ENCODE measurements at regions of chr5 and their contacts with region 1.

Region 1: GRCh38 chr5:399296-400281 is 43.4 kb upstream of the EXOC3 start:
- H3K4me3 Mint-ChIP-seq: peak overlapping the region; percentile 68
- H3K27ac Mint-ChIP-seq: peak overlapping the region; percentile 99
- H3K4me1 Mint-ChIP-seq: peaks cover 86% of the 10 kb centered on the region
- H3K27me3 Mint-ChIP-seq: peaks cover 2% of the 10 kb centered on the region

Region 2: GRCh38 chr5:368183-369084 is 31.2 kb before region 1 on chr5:
- intact Hi-C with region 1: loop called (anchors 2 kb)
- H3K4me3 Mint-ChIP-seq: no peak overlapping the region
- H3K27ac Mint-ChIP-seq: peak overlapping the region; percentile 89
- H3K4me1 Mint-ChIP-seq: peaks cover 74% of the 10 kb centered on the region
- H3K27me3 Mint-ChIP-seq: no peaks in the 10 kb centered on the region

Region 3: DNA sequence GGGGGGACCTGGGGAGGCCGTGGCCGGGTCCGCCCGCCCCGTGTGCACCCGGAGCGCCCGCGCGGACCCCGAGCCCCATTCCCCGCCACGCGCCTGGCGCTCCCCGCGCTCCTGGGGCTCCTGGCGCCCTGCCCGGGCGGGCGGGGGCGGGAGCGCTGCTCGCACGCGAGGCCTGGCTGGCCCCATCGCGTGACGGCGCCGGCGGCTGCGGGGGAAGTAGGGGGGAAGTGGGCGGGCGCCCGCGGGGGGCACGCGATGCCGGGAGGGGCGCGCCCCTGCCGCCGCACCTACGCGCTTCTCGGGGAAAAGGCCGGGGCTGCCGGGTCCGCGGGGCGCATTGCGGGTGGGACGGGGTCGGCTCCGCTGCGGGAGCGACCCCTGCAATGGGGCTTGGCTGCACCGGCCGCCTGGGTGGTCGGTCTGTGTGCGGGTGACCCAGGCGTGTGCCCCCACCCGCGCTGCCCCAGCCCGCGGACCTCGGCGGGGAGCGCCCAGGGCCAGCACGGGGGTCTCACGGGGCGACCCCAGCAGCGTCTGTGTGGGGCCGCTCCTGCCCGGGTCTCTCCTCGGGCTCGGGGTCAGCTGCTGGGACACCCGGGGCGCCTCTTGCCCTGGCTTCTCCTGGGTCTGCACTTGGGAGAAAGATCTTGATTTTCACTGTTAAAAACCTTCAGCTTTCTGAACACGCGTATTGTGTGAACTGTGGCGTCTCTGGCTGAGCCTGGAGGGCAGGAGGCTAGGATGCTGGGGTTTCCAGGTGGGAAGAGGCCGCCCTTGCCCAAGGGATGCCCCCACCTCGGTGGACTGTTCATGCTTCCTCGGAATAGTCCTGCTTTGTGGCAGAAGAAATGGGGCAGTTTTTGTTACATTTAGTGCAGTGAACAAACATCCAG is 25.6 kb before region 1 on chr5:
- intact Hi-C with region 1: loop called (anchors 1 kb)
- H3K4me3 Mint-ChIP-seq: peak overlapping the region; percentile 58
- H3K27ac Mint-ChIP-seq: peak overlapping the region; percentile 88
- H3K4me1 Mint-ChIP-seq: peaks cover 89% of the 10 kb centered on the region
- H3K27me3 Mint-ChIP-seq: no peaks in the 10 kb centered on the region

Region 4: DNA sequence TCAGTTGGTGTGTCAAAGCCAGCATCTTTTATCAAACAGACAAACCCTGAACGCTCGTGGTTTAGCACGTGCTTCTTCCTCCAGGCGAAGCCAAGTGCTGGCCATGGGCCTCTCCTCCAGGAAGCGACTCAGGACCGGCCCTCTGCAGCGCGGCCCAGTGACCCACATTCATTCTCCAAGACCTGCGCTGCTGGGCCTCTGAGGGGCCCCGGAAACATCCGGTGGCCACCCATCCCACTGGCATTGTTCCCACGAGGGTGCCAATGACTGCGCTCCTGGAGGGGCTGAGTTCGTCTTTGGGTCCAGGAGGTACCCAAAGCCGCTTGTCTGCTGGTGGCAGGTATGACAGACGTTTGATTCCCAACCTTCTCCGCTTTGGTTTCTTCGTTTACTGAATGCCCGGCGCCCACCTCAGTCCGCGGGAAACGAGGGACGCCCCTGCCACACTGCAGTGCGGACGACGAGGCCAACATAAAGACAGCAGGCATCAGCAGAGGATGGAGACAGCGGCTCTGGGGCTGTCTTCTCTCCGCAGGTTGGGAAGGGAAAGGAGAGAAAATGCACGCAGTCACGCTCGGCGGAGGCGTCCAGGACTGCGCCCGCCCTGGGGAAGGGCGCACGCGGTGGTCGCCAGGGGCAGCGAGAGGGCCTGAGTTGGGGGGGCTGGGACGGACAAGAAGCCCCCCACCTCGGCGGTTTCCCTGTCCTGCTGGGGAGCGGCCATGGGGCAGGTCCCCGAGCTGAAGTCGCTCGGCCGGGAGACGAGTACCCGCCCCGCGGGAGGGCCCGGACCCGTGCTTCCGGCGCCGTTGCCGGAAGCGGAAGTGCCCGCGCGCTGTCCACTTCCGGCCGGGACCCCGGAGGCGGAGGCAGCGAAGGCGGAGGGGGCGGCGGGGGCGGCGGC is 43.0 kb after region 1 on chr5 and contains the start of gene EXOC3:
- intact Hi-C with region 1: no loop called
- H3K4me3 Mint-ChIP-seq: peak within 1 kb of the TSS; percentile 88
- H3K27ac Mint-ChIP-seq: peak within 1 kb of the TSS; percentile 90
- H3K4me1 Mint-ChIP-seq: peaks cover 79% of the 10 kb centered on the region
- H3K27me3 Mint-ChIP-seq: no peaks in the 10 kb centered on the region

Measured in dendritic cell treated with granulocyte-macrophage colony-stimulating factor and Interleukin-4, amounts not matched to agents 40 ng/mL and 50 ng/mL, for 4 days (primary cell).